ENCODE measurements at regions of chr11 and their contacts with region 1.

Region 1: GRCh38 chr11:6682936-6683861 is at the start of gene MRPL17:
- DNase-seq: peak; percentile 100
- H3K4me3 Mint-ChIP-seq: peak within 1 kb of the TSS; percentile 99
- H3K27ac Mint-ChIP-seq: peak within 1 kb of the TSS; percentile 99
- H3K4me1 Mint-ChIP-seq: peaks cover 42% of the 10 kb centered on the region
- H3K27me3 Mint-ChIP-seq: no peaks in the 10 kb centered on the region
- total RNA-seq, gene MRPL17: 121 and 132 TPM in 2 replicates

Region 2: DNA sequence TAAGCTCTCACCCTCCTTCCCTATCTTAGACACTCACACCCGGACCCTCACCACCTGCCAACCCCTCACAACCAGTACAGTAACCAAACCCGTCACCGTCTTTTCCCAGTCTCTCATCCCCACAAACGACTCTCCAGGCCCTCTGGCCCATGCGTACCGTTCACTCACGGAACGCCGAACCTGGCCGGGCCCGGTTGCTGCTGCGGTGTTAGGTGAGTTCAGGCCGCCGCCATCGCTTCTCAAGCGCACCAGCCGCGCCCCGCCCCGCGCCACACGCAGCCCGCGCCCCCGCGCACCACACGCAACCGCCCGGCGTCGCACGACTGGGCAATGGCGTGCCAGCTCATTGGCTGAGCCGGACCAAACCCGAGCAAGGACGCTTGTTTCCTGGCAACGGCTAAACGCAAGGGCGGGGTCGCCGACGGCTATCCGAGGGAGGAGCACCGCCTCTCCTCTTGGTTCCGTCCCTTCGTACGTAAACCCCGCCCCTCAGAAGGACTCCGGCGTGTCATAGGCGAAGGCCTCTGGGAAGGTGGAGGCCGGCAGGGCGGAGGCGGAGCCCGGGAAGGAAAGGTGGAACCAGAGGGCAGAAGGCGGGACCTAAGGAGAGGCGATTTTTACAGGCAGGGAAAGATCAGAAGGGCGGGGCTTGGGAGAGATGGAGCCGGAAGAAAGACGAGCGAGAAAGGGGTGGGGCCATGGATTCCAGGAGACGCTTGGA is 448.7 kb before region 1 on chr11 and contains the start of gene FHIP1B:
- intact Hi-C with region 1: loop called (anchors 2 kb)
- DNase-seq: peak; percentile 100
- H3K4me3 Mint-ChIP-seq: peak within 1 kb of the TSS; percentile 99
- H3K27ac Mint-ChIP-seq: peak within 1 kb of the TSS; percentile 96
- H3K4me1 Mint-ChIP-seq: peaks cover 38% of the 10 kb centered on the region
- H3K27me3 Mint-ChIP-seq: peaks cover 3% of the 10 kb centered on the region
- total RNA-seq, gene FHIP1B: 19.3 TPM in 2 replicates

Region 3: DNA sequence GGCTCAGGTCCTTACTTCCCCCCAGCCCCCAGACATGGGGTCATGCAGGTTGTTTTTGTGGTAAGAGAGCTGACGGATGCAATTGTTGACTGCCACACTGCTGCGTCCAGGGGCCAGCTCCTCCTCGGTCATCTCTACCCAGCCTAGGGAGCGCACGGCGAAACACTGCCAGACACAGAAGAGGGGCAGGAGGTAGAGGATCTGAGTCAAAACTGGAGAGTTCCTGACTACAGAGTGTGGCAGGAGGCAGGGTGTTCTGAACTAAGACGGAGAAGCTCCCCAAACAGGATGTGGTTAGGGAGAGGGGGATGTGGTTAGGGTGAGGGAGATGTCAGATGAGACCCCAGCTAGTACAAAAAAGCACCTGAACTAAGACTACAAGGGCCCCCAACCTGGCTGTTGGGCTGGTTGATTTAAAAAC is 280.6 kb before region 1 on chr11:
- intact Hi-C with region 1: loop called (anchors 1 kb)
- DNase-seq: peak; percentile 79
- H3K4me3 Mint-ChIP-seq: peak overlapping the region; percentile 80
- H3K27ac Mint-ChIP-seq: peak overlapping the region; percentile 78
- H3K4me1 Mint-ChIP-seq: peaks cover 58% of the 10 kb centered on the region
- H3K27me3 Mint-ChIP-seq: no peaks in the 10 kb centered on the region

Region 4: DNA sequence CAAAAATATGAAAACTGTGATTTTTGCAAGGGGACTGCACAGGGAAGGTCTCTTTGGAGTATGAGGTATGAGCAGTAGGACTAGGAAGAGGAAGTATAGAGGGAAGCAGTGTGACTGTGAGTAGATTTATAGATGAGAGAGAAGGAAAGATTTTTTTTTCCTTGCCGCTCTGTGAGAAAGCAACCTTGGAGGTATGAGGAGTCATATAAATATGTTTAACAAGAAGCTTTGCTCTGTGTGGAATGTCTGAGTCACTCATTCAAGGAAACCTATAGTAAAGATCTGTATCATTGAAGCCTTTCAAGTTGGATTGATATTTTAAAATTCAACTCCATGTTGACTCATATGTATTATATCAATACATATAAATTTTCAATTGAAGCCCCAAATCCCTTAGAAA is 159.9 kb before region 1 on chr11:
- intact Hi-C with region 1: loop called (anchors 1 kb)
- DNase-seq: no peak
- H3K4me3 Mint-ChIP-seq: no peak overlapping the region
- H3K27ac Mint-ChIP-seq: peak overlapping the region; percentile 4
- H3K4me1 Mint-ChIP-seq: peaks cover 39% of the 10 kb centered on the region
- H3K27me3 Mint-ChIP-seq: peaks cover 2% of the 10 kb centered on the region

Region 5: GRCh38 chr11:6612213-6613041 is 70.8 kb before region 1 on chr11 and contains the start of gene TAF10:
- intact Hi-C with region 1: loop called (anchors 1 kb)
- DNase-seq: peak; percentile 95
- H3K4me3 Mint-ChIP-seq: peak within 1 kb of the TSS; percentile 93
- H3K27ac Mint-ChIP-seq: peak within 1 kb of the TSS; percentile 87
- H3K4me1 Mint-ChIP-seq: peaks cover 29% of the 10 kb centered on the region
- H3K27me3 Mint-ChIP-seq: no peaks in the 10 kb centered on the region
- total RNA-seq, gene TAF10: 155 and 166 TPM in 2 replicates

Region 6: DNA sequence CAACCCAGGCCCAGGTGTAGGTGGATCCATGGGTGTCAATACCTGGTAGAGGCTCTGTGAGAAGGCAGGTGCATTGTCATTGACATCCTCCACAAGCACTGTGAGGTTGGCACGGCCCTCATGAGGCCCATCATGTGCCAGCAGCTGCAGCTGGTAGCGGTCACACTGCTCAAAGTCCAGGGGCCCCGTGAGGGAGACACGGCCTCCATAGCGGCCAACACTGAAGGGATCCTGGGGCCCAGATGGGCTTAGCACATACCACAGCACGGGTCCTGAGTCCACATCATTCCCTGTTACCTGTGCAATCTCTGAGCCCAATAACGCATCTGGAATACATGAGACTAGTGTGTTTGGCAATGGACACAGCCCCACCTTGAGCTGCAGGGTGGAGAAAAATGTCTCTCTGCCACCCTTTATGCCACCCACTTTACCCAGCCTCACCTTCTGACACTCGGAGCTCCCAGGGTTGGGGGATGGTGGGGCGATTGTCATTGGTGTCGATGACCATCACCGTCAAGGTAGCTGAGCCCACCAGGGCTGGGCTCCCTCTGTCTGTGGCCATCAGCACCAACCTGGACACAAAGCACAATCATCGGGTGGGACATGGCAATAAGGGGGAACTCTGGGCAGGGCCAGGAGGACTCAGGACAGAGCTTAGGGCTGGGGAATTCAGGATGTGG is 57.9 kb before region 1 on chr11:
- intact Hi-C with region 1: no loop called
- DNase-seq: no peak
- H3K4me3 Mint-ChIP-seq: no peak overlapping the region
- H3K27ac Mint-ChIP-seq: no peak overlapping the region
- H3K4me1 Mint-ChIP-seq: peaks cover 13% of the 10 kb centered on the region
- H3K27me3 Mint-ChIP-seq: no peaks in the 10 kb centered on the region

Region 7: GRCh38 chr11:6693342-6694228 is 10.4 kb after region 1 on chr11:
- intact Hi-C with region 1: loop called (anchors 1 kb)
- DNase-seq: no peak
- H3K4me3 Mint-ChIP-seq: no peak overlapping the region
- H3K27ac Mint-ChIP-seq: peak overlapping the region; percentile 4
- H3K4me1 Mint-ChIP-seq: peaks cover 24% of the 10 kb centered on the region
- H3K27me3 Mint-ChIP-seq: no peaks in the 10 kb centered on the region